PC-3 (cell line): ENCODE measurements at regions of chr6 and their contacts with region 1.

Region 1: DNA sequence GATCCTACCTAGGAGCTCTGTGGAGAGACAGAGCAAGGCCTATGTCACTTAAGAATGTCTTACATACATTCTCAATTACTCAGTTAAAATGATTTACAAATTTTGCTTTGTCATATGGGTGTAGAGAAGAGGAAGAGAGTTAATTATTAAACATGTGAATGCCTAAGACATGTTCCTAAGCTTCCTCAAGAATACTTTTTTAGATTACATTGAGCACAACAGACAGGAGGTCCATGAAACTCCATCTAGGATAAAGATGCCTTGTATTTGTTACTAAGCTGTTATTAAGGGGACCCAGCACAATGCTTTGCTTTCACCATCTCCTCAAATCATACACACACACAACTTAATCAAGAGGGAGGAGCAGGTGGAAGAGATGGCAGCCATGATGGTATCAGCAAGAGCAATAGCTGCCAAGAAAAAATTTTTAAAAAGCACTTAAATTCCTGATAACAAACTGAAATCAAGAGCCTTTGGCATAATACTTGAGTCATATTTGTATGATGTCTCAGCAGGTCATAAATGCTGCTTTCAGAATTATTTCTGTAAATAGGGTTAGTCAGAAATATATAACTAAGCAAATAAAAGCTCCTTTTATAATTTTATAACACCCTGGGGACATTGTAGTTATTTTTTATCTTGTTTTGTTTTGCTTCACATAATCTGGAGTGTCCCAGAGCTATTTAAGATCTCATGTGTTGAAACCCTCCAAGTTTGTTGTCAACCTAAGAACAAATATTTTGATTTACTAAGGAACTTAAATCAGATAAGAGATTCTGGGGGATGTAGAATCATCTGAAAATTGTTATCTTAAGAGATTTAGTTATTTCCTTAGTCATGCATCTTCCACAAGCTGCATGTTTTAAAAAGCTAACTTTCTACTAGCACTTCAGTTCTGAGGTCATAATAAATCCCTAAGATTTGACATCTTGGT is 70.0 kb upstream of the CD2AP start:
- DNase-seq: peak; percentile 95
- ATAC-seq: peak; percentile 63
- H3K4me3 ChIP-seq: no peak overlapping the region
- H3K27ac ChIP-seq: peak overlapping the region; percentile 95
- H3K4me1 ChIP-seq: peaks cover 51% of the 10 kb centered on the region
- H3K27me3 ChIP-seq: no peaks in the 10 kb centered on the region
- CTCF ChIP-seq: no peak

Region 2: GRCh38 chr6:47153032-47153755 is 254.4 kb before region 1 on chr6:
- CTCF ChIA-PET with region 1: no interaction called
- POLR2A ChIA-PET with region 1: interaction called, 13 read pairs
- intact Hi-C with region 1: no loop called
- DNase-seq: no peak
- ATAC-seq: no peak
- H3K4me3 ChIP-seq: no peak overlapping the region
- H3K27ac ChIP-seq: no peak overlapping the region
- H3K4me1 ChIP-seq: peaks cover 5% of the 10 kb centered on the region; the same call in 1 of the 2 replicates
- H3K27me3 ChIP-seq: no peaks in the 10 kb centered on the region
- CTCF ChIP-seq: no peak

Region 3: GRCh38 chr6:47203266-47203937 is 204.2 kb before region 1 on chr6:
- CTCF ChIA-PET with region 1: no interaction called
- POLR2A ChIA-PET with region 1: no interaction called
- intact Hi-C with region 1: no loop called
- DNase-seq: peak; percentile 41
- ATAC-seq: peak; percentile 89
- H3K4me3 ChIP-seq: no peak overlapping the region
- H3K27ac ChIP-seq: peak overlapping the region; percentile 27; the same call in 1 of the 2 replicates
- H3K4me1 ChIP-seq: peaks cover 11% of the 10 kb centered on the region
- H3K27me3 ChIP-seq: no peaks in the 10 kb centered on the region
- CTCF ChIP-seq: no peak

Region 4: GRCh38 chr6:47366335-47366890 is 41.2 kb before region 1 on chr6:
- CTCF ChIA-PET with region 1: no interaction called
- POLR2A ChIA-PET with region 1: no interaction called
- intact Hi-C with region 1: loop called (anchors 1 kb)
- DNase-seq: peak; percentile 81
- ATAC-seq: peak; percentile 96
- H3K4me3 ChIP-seq: no peak overlapping the region
- H3K27ac ChIP-seq: peak overlapping the region; percentile 65
- H3K4me1 ChIP-seq: peaks cover 31% of the 10 kb centered on the region
- H3K27me3 ChIP-seq: no peaks in the 10 kb centered on the region
- CTCF ChIP-seq: no peak

Region 5: GRCh38 chr6:47420394-47421371 is 13.1 kb after region 1 on chr6:
- CTCF ChIA-PET with region 1: no interaction called
- POLR2A ChIA-PET with region 1: no interaction called
- intact Hi-C with region 1: no loop called
- DNase-seq: peak; percentile 79
- ATAC-seq: peak; percentile 68
- H3K4me3 ChIP-seq: peak overlapping the region; percentile 11; the same call in 1 of the 2 replicates
- H3K27ac ChIP-seq: peak overlapping the region; percentile 34
- H3K4me1 ChIP-seq: peaks cover 38% of the 10 kb centered on the region
- H3K27me3 ChIP-seq: no peaks in the 10 kb centered on the region
- CTCF ChIP-seq: no peak

Region 6: DNA sequence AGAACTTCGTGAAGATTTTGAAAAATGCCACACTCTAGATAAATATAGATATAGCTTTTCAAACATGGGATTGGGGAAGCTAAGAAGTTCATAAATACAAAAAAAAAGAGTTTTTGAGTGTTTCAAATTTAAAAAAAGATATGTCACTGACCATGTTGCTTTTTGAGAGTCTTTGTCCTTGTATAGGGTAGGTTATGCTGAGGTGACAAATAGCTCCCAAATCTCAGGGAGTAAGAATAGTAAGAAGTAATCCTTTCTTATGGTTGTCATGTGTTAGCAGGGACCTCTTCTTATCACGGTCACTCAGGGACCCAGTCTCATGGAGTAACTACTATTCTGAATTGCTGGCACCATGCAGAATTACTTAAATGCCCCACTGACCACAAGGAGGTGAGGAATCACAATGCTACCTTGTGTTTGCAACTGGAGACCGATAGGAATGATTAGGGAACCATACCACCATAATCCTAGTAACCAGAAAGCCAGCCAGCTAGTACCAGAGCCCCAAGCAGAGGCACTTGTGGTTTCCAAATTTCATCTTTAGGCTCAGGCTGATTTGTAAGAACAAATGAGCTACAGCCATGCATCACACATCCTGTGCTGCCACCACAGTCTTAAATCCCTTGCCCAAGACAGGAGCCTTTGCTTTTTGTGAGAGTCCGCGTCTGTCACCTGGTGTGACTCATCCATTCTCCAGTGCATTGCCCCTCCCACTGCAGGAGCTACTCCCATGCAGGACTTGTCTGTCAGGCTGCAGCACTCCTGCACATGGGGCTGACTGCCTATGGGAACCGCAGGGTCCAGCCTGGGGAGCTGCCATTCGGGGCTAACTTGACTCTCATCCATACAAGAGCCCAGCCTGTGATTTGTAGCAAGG is 248.3 kb after region 1 on chr6:
- CTCF ChIA-PET with region 1: no interaction called
- POLR2A ChIA-PET with region 1: no interaction called
- intact Hi-C with region 1: no loop called
- DNase-seq: peak; percentile 91
- ATAC-seq: peak; percentile 97
- H3K4me3 ChIP-seq: no peak overlapping the region
- H3K27ac ChIP-seq: peak overlapping the region; percentile 57
- H3K4me1 ChIP-seq: peaks cover 40% of the 10 kb centered on the region
- H3K27me3 ChIP-seq: no peaks in the 10 kb centered on the region
- CTCF ChIP-seq: no peak